GM12878 (cell line): ENCODE measurements at regions of chr10 and their contacts with region 1.

Region 1: GRCh38 chr10:110304780-110305421 is at the start of gene SMNDC1:
- DNase-seq: peak; percentile 89
- ATAC-seq: peak; percentile 91
- H3K4me3 ChIP-seq: peak within 1 kb of the TSS; percentile 81
- H3K27ac ChIP-seq: peak within 1 kb of the TSS; percentile 88
- H3K4me1 ChIP-seq: peaks cover 7% of the 10 kb centered on the region; the same call in 1 of the 2 replicates
- H3K27me3 ChIP-seq: no peaks in the 10 kb centered on the region
- CTCF ChIP-seq: no peak
- EP300 ChIP-seq: no peak
- POLR2A ChIP-seq: peak; percentile 88
- RAD21 ChIP-seq: no peak
- polyA plus RNA-seq, gene SMNDC1: 10.1 to 12.9 TPM

Region 2: DNA sequence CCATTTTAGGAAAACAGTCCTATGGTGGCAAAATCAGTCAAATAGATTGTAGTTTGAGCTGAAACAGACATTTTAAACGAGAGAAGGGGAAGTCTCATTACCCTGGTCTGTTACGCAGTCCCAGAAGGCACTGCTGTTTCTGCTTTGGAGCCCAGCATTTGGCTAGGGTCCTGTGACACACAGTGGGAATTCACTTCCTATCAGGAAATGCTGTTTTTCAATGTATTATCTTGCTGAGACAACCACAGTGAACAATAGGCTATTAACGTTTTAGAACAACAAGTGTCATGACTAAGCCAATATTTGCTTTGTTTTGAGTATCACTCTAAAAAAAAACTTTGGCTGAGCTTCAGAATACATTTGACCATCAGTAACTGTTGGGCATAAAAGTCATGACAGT is 223.0 kb before region 1 on chr10:
- CTCF ChIA-PET with region 1: no interaction called
- POLR2A ChIA-PET with region 1: no interaction called
- RAD21 ChIA-PET with region 1: no interaction called
- SMC1A ChIA-PET with region 1: no interaction called
- in situ Hi-C with region 1: no loop called
- intact Hi-C with region 1: no loop called
- DNase-seq: no peak
- ATAC-seq: peak; percentile 11
- H3K4me3 ChIP-seq: no peak overlapping the region
- H3K27ac ChIP-seq: peak overlapping the region; percentile 57; the same call in 1 of the 2 replicates
- H3K4me1 ChIP-seq: peaks cover 22% of the 10 kb centered on the region
- H3K27me3 ChIP-seq: no peaks in the 10 kb centered on the region
- CTCF ChIP-seq: no peak
- EP300 ChIP-seq: no peak
- POLR2A ChIP-seq: no peak
- RAD21 ChIP-seq: no peak

Region 3: GRCh38 chr10:110317866-110318850 is 13.3 kb after region 1 on chr10:
- CTCF ChIA-PET with region 1: interaction called, 14 read pairs
- POLR2A ChIA-PET with region 1: interaction called, 3 read pairs
- RAD21 ChIA-PET with region 1: interaction called, 7 read pairs
- SMC1A ChIA-PET with region 1: interaction called, 30 read pairs
- in situ Hi-C with region 1: no loop called
- intact Hi-C with region 1: no loop called
- DNase-seq: no peak
- ATAC-seq: peak; percentile 84
- H3K4me3 ChIP-seq: no peak overlapping the region
- H3K27ac ChIP-seq: peak overlapping the region; percentile 17
- H3K4me1 ChIP-seq: peaks cover 5% of the 10 kb centered on the region; the same call in 1 of the 2 replicates
- H3K27me3 ChIP-seq: no peaks in the 10 kb centered on the region
- CTCF ChIP-seq: no peak
- EP300 ChIP-seq: no peak
- POLR2A ChIP-seq: no peak
- RAD21 ChIP-seq: no peak

Region 4: DNA sequence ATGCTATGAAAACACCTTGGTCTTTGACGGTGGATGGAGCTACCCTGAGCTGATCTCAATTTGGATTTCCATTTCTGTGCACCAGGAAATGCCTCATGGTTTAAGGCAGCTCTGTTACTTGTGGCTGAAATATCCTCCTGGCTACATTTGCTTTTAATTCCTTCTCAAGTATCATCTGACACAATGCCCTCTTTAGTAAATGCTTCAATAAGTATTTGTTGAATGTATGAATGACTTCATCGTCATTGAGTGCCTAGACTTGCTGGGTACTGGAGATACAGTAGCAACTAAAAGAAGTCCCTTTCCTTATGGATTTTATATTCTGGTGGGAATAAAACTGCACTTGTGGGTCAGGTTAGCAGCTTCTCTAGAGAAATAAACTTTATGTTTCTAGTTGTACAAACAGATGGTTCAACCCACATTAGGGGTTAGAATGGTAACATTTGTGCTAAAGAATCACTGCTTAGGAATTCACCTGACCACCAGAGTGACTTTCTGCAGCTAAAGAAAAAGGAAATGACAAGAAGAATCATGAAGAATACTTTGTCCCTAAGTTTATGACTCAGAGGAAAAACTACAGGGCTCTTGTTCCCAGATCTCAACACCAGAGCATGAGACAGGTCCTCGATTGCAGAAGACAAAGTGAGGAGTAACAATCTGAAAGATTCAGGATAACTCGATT is 21.6 kb after region 1 on chr10:
- CTCF ChIA-PET with region 1: interaction called, 8 read pairs
- POLR2A ChIA-PET with region 1: interaction called, 4 read pairs
- RAD21 ChIA-PET with region 1: interaction called, 6 read pairs
- SMC1A ChIA-PET with region 1: interaction called, 30 read pairs
- in situ Hi-C with region 1: no loop called
- intact Hi-C with region 1: no loop called
- DNase-seq: peak; percentile 51
- ATAC-seq: peak; percentile 49
- H3K4me3 ChIP-seq: no peak overlapping the region
- H3K27ac ChIP-seq: peak overlapping the region; percentile 79
- H3K4me1 ChIP-seq: peaks cover 39% of the 10 kb centered on the region
- H3K27me3 ChIP-seq: no peaks in the 10 kb centered on the region
- CTCF ChIP-seq: no peak
- EP300 ChIP-seq: peak in 1 of 2 experiments; percentile 60; a peak in 1 of 4 replicates
- POLR2A ChIP-seq: no peak
- RAD21 ChIP-seq: no peak

Region 5: DNA sequence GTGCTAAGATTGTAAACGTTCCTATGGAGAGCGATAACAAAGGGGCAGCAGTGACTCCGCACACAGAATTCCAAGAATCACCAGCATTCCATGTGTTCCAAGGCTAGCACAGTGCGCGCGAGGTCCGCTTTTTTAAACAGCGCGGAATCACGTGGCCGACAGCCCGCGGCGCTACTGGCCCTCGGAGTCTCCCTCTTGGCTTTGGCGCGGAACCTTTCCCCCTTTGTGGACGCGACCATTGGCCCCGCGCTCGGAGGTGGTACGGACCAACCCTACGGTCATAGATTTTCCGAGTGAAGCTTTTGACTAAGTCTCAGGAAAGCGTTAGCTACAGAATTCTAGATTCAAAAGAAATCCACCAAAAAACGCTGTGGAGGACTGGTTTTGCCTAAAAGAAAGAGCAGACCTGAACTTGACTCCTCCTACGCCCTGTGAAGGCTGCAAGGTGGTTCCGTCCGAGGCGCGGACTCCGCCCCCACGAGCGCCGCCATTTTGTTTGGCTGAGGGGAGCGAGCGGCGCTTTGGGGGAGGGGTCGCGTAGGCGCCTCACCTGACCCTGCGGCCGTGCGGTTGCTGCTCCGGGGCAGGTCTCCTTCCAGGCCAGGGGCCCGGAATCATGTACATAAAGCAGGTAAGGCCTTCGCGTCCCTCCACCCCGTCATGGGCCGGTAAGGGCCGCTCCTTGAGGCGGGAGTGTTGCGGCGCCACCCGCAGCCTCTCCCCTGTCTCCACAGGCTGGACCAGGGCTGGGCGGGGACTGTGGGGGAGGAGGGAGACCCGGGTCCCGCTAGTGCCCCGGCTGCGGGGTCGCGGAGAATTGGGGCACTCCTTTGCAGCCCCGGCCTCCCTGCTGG is 262.5 kb after region 1 on chr10 and contains the start of gene SMC3:
- CTCF ChIA-PET with region 1: interaction called, 14 read pairs
- POLR2A ChIA-PET with region 1: interaction called, 7 read pairs
- RAD21 ChIA-PET with region 1: interaction called, 6 read pairs
- SMC1A ChIA-PET with region 1: interaction called, 7 read pairs
- in situ Hi-C with region 1: no loop called
- intact Hi-C with region 1: no loop called
- DNase-seq: peak; percentile 85
- ATAC-seq: peak; percentile 88
- H3K4me3 ChIP-seq: peak within 1 kb of the TSS; percentile 70
- H3K27ac ChIP-seq: peak within 1 kb of the TSS; percentile 88
- H3K4me1 ChIP-seq: peaks cover 9% of the 10 kb centered on the region
- H3K27me3 ChIP-seq: no peaks in the 10 kb centered on the region
- CTCF ChIP-seq: no peak
- EP300 ChIP-seq: peak in 1 of 2 experiments; percentile 67; a peak in 1 of 4 replicates
- POLR2A ChIP-seq: peak; percentile 88
- RAD21 ChIP-seq: no peak
- polyA plus RNA-seq, gene SMC3: 31.0 to 43.0 TPM

Region 6: DNA sequence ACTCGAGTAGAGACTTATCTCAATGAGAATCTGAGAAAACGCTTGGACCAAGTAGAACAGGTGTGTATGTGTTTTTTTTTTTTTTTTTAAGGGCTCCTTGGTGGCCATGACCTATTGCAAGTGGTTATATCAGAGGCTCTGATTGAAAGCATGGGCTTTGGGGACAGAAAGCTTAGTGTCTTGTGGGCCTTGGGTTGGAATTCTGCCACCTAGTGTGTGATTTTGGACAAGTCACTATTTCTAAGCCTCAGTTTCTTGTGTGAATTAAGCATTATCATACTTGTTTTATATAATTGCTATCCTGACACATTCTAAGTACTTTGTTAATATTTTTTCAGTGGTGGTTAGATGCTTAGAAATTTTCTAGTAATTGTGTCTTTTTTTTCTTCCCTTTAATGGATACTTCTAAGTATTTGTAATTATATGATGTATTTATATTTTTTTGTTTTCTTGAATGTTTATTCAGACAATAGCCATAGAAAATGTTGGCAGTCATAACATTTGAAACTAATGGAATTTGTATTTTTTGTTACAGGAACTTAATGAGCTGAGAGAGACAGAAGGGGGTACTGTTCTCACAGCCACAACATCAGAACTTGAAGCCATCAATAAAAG is 295.7 kb after region 1 on chr10:
- CTCF ChIA-PET with region 1: interaction called, 81 read pairs
- POLR2A ChIA-PET with region 1: no interaction called
- RAD21 ChIA-PET with region 1: interaction called, 34 read pairs
- SMC1A ChIA-PET with region 1: interaction called, 40 read pairs
- in situ Hi-C with region 1: loop called (anchors 5 kb)
- intact Hi-C with region 1: loop called (anchors 1 kb)
- DNase-seq: no peak
- ATAC-seq: peak; percentile 95
- H3K4me3 ChIP-seq: no peak overlapping the region
- H3K27ac ChIP-seq: no peak overlapping the region
- H3K4me1 ChIP-seq: no peaks in the 10 kb centered on the region
- H3K27me3 ChIP-seq: no peaks in the 10 kb centered on the region
- CTCF ChIP-seq: peak; percentile 40 to 58 (median 54); a peak in 5 of 6 replicates
- EP300 ChIP-seq: no peak
- POLR2A ChIP-seq: no peak
- RAD21 ChIP-seq: peak; percentile 54; the same call in 1 of the 2 replicates

Region 7: DNA sequence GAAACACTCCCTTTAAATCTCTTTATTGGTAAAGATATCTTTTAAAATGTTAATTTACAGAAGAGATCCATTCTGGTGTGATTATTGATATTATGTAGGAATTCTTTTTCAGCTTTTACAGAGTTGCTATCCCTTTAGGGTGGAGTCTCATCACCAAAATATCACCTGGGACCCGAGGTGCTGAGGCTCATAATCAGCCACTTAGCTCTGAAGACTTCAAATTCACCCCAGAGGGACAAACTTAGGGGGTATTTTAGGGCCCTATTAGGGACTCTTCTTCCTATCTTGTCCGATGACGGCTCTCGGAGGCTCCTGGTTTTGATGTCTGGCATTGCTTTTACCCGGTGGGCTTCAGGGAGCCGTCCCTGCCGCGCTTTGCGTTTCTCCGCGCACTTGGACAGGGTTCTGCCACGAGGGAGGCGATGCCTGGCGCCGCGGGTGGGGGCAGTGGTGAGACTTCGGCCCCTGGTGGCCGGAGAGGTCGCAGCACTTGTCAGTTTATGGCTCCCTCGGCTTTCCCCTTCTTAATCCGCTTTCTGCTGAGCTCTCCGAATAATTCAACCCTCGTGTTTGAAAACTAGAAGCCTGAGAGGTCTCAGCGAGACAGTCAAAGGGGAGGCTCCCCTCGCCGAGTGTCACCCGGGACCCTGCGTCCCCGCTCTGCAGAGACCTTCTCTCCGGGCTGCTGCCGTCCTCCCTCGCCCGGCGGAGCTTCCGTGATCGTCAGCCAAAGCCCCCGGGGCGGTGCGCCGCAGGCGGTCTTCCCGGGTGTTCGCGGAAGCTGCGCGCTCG is 367.1 kb after region 1 on chr10:
- CTCF ChIA-PET with region 1: interaction called, 10 read pairs
- POLR2A ChIA-PET with region 1: no interaction called
- RAD21 ChIA-PET with region 1: interaction called, 4 read pairs
- SMC1A ChIA-PET with region 1: interaction called, 9 read pairs
- in situ Hi-C with region 1: loop called (anchors 10 kb)
- intact Hi-C with region 1: loop called (anchors 5 kb)
- DNase-seq: peak; percentile 27
- ATAC-seq: peak; percentile 99
- H3K4me3 ChIP-seq: peak overlapping the region; percentile 74
- H3K27ac ChIP-seq: peak overlapping the region; percentile 62
- H3K4me1 ChIP-seq: no peaks in the 10 kb centered on the region
- H3K27me3 ChIP-seq: no peaks in the 10 kb centered on the region
- CTCF ChIP-seq: peak; percentile 99 to 100 (median 99)
- EP300 ChIP-seq: no peak
- POLR2A ChIP-seq: peak; percentile 80
- RAD21 ChIP-seq: peak; percentile 64

Region 8: GRCh38 chr10:111004016-111004415 is 699.1 kb after region 1 on chr10:
- CTCF ChIA-PET with region 1: no interaction called
- POLR2A ChIA-PET with region 1: no interaction called
- RAD21 ChIA-PET with region 1: no interaction called
- SMC1A ChIA-PET with region 1: no interaction called
- in situ Hi-C with region 1: no loop called
- intact Hi-C with region 1: loop called (anchors 10 kb)
- DNase-seq: no peak
- ATAC-seq: no peak
- H3K4me3 ChIP-seq: no peak overlapping the region
- H3K27ac ChIP-seq: no peak overlapping the region
- H3K4me1 ChIP-seq: no peaks in the 10 kb centered on the region
- H3K27me3 ChIP-seq: no peaks in the 10 kb centered on the region
- CTCF ChIP-seq: no peak
- EP300 ChIP-seq: no peak
- POLR2A ChIP-seq: no peak
- RAD21 ChIP-seq: no peak